Endothelial cell of umbilical vein (primary cell): ENCODE measurements at regions of chr11 and their contacts with region 1.

Region 1: GRCh38 chr11:5297721-5298323 is 3.9 kb downstream of the OR51B4 start:
- DNase-seq: no peak
- H3K4me3 ChIP-seq: no peak overlapping the region
- H3K27ac ChIP-seq: no peak overlapping the region
- H3K4me1 ChIP-seq: no peaks in the 10 kb centered on the region
- H3K27me3 ChIP-seq: no peaks in the 10 kb centered on the region
- CTCF ChIP-seq: no peak
- POLR2A ChIP-seq: no peak

Region 2: GRCh38 chr11:5267033-5267563 is 30.7 kb before region 1 on chr11:
- CTCF ChIA-PET with region 1: no interaction called
- POLR2A ChIA-PET with region 1: no interaction called
- dilution Hi-C with region 1: no loop called
- intact Hi-C with region 1: loop called (anchors 2 kb)
- DNase-seq: no peak
- H3K4me3 ChIP-seq: no peak overlapping the region
- H3K27ac ChIP-seq: no peak overlapping the region
- H3K4me1 ChIP-seq: no peaks in the 10 kb centered on the region
- H3K27me3 ChIP-seq: no peaks in the 10 kb centered on the region
- CTCF ChIP-seq: no peak
- POLR2A ChIP-seq: no peak

Region 3: DNA sequence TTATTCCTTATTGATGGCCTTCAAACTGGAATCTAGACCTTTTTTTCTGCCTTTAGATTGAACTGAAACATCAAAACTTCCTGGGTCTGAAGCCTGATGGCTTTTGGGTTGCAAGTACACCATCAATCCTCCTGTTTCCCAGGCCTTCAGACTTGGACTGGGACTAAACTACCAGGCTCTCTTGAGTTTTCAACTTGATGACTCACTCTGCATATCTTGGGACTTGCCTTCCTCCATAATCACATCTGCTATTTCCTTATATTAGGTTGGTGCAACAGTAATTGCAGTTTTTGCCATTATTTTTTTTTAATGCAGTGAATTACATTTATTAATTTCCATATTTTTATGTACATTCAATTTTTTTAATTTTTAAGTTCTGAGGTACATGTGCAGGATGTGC is 38.5 kb after region 1 on chr11:
- CTCF ChIA-PET with region 1: no interaction called
- POLR2A ChIA-PET with region 1: no interaction called
- dilution Hi-C with region 1: no loop called
- intact Hi-C with region 1: no loop called
- DNase-seq: no peak
- H3K4me3 ChIP-seq: no peak overlapping the region
- H3K27ac ChIP-seq: no peak overlapping the region
- H3K4me1 ChIP-seq: no peaks in the 10 kb centered on the region
- H3K27me3 ChIP-seq: no peaks in the 10 kb centered on the region
- CTCF ChIP-seq: no peak
- POLR2A ChIP-seq: no peak